ENCODE measurements at regions of chr10 and their contacts with region 1.

Region 1: DNA sequence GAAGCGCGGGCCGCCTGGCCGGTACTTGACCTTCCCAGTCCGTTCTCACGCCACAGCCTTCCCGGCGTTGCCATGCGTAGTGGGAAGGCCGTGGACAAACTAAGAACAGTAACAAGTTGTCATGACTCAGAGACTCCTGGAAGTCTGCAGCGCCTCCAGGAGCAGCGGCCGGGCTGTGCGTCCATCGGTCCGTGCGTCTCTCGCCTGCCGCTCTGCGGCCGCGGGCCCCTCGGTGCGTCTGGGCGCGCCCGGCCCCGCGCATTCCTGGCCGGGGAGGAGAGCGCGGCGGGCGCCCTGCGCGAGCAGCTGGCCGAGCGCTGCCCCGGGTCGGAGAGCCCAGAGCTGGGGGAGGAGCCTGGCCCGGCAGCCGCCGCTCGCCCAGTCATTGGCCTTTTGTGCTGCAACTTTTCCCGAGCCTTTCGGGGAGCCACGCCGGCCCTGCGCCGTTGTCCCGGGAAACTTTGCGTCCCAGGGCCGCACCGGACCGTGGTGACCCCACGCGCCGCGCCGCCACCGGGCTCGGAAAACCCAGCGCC is 123.7 kb downstream of the TACC2 start:
- DNase-seq: peak; percentile 58 to 80
- H3K4me3 ChIP-seq: peak overlapping the region; percentile 66 to 96 (median 74)
- H3K27ac ChIP-seq: peak overlapping the region; percentile 71; the same call in 1 of the 2 replicates
- H3K4me1 ChIP-seq: peaks cover 0 to 6% (median 2%) of the 10 kb centered on the region in 4 experiments; a peak in 5 of 7 replicates
- H3K27me3 ChIP-seq: no peaks in the 10 kb centered on the region; a peak in 3 of 7 replicates
- CTCF ChIP-seq: peak; percentile 49 to 84 (median 49)
- EP300 ChIP-seq: no peak
- POLR2A ChIP-seq: no peak; a peak in 1 of 3 replicates
- RAD21 ChIP-seq: peak; percentile 54 to 63

Region 2: GRCh38 chr10:121880895-121881294 is 231.8 kb before region 1 on chr10:
- CTCF ChIA-PET with region 1: no interaction called
- POLR2A ChIA-PET with region 1: no interaction called
- DNase-seq: no peak
- H3K4me3 ChIP-seq: no peak overlapping the region
- H3K27ac ChIP-seq: no peak overlapping the region
- H3K4me1 ChIP-seq: no peaks in the 10 kb centered on the region
- H3K27me3 ChIP-seq: no peaks in the 10 kb centered on the region
- CTCF ChIP-seq: no peak
- EP300 ChIP-seq: no peak
- POLR2A ChIP-seq: no peak
- RAD21 ChIP-seq: no peak

Region 3: GRCh38 chr10:122007415-122007814 is 105.3 kb before region 1 on chr10:
- CTCF ChIA-PET with region 1: no interaction called
- POLR2A ChIA-PET with region 1: no interaction called
- DNase-seq: no peak
- H3K4me3 ChIP-seq: no peak overlapping the region
- H3K27ac ChIP-seq: no peak overlapping the region
- H3K4me1 ChIP-seq: no peaks in the 10 kb centered on the region
- H3K27me3 ChIP-seq: no peaks in the 10 kb centered on the region
- CTCF ChIP-seq: no peak
- EP300 ChIP-seq: no peak
- POLR2A ChIP-seq: no peak
- RAD21 ChIP-seq: no peak

Region 4: DNA sequence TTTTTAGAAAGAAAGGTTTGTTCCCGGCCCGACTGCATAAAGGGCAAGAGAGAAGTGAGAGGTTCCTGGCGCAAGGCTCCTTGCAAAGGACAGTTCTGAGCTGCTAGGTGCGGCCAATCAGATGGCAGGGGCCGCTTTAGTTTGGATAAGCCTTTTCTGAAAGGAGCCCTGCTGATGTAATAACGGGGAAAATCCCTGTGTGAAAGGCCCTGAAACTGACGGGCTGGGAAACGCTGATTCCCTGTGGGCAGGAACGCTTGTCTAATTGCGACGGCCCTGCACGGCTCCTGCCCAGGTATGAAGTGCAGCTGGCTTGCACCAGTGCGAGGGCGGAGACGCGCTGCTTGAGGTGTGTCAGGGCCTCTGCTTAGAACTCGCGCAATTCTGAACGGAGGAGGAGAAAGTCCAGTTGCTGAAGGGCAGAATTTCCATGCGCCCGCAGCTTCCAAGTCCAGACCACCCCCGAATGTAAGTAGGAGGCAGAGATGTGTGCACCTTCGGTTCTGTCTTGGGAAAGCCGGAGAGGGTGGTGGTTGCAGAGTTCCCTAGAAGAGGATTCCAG is 93.2 kb before region 1 on chr10:
- CTCF ChIA-PET with region 1: no interaction called
- POLR2A ChIA-PET with region 1: no interaction called
- DNase-seq: peak in 1 of 2 experiments; percentile 52
- H3K4me3 ChIP-seq: peak overlapping the region in 1 of 4 experiments; percentile 23; a peak in 2 of 8 replicates
- H3K27ac ChIP-seq: no peak overlapping the region
- H3K4me1 ChIP-seq: peaks cover 0 to 8% (median 5%) of the 10 kb centered on the region in 4 experiments; a peak in 6 of 7 replicates
- H3K27me3 ChIP-seq: no peaks in the 10 kb centered on the region
- CTCF ChIP-seq: no peak
- EP300 ChIP-seq: no peak
- POLR2A ChIP-seq: no peak
- RAD21 ChIP-seq: no peak

Region 5: DNA sequence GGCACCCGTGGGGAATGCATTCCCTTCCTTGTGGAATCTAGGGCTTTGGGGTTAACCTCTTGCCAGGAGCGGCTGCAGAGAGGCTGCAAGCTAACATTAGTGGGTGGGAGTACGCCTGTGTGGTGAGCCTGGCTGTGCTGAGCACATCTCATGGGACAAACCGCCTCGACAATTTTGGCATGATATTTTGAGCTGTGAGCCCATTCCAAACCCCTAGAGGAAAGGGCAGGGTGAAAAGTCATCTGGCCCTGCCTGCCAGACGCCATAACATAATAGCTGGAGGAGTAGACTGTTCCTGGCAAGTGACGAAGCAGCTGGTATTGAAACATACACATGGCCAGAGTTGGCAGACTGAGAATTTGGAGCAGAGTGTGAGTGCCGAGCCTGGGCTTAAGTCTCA is 13.8 kb before region 1 on chr10:
- CTCF ChIA-PET with region 1: interaction called, 11 read pairs
- POLR2A ChIA-PET with region 1: interaction called, 25 read pairs
- DNase-seq: no peak
- H3K4me3 ChIP-seq: no peak overlapping the region
- H3K27ac ChIP-seq: no peak overlapping the region
- H3K4me1 ChIP-seq: no peaks in the 10 kb centered on the region
- H3K27me3 ChIP-seq: no peaks in the 10 kb centered on the region
- CTCF ChIP-seq: no peak
- EP300 ChIP-seq: no peak
- POLR2A ChIP-seq: no peak
- RAD21 ChIP-seq: no peak

Region 6: GRCh38 chr10:122126763-122127659 is 14.3 kb after region 1 on chr10:
- CTCF ChIA-PET with region 1: interaction called, 4 read pairs
- POLR2A ChIA-PET with region 1: interaction called, 22 read pairs
- DNase-seq: no peak
- H3K4me3 ChIP-seq: no peak overlapping the region
- H3K27ac ChIP-seq: peak overlapping the region; percentile 38; the same call in 1 of the 2 replicates
- H3K4me1 ChIP-seq: peaks cover 5 to 13% (median 7%) of the 10 kb centered on the region in 4 experiments
- H3K27me3 ChIP-seq: no peaks in the 10 kb centered on the region
- CTCF ChIP-seq: no peak
- EP300 ChIP-seq: no peak
- POLR2A ChIP-seq: peak in 1 of 2 experiments; percentile 52; a peak in 1 of 3 replicates
- RAD21 ChIP-seq: no peak

Region 7: GRCh38 chr10:122132331-122132755 is 19.6 kb after region 1 on chr10:
- CTCF ChIA-PET with region 1: interaction called, 8 read pairs
- POLR2A ChIA-PET with region 1: interaction called, 12 read pairs
- DNase-seq: peak in 1 of 2 experiments; percentile 74
- H3K4me3 ChIP-seq: peak overlapping the region in 1 of 4 experiments; percentile 26; a peak in 1 of 8 replicates
- H3K27ac ChIP-seq: 0 out of 2 replicates have a peak overlapping the region, but pooled peaks have one; percentile 2
- H3K4me1 ChIP-seq: peaks cover 3 to 13% (median 8%) of the 10 kb centered on the region in 4 experiments
- H3K27me3 ChIP-seq: no peaks in the 10 kb centered on the region
- CTCF ChIP-seq: no peak
- EP300 ChIP-seq: no peak
- POLR2A ChIP-seq: no peak
- RAD21 ChIP-seq: no peak

Measured in H1 (cell line).